ENCODE measurements at regions of chr1 and their contacts with region 1.

Region 1: DNA sequence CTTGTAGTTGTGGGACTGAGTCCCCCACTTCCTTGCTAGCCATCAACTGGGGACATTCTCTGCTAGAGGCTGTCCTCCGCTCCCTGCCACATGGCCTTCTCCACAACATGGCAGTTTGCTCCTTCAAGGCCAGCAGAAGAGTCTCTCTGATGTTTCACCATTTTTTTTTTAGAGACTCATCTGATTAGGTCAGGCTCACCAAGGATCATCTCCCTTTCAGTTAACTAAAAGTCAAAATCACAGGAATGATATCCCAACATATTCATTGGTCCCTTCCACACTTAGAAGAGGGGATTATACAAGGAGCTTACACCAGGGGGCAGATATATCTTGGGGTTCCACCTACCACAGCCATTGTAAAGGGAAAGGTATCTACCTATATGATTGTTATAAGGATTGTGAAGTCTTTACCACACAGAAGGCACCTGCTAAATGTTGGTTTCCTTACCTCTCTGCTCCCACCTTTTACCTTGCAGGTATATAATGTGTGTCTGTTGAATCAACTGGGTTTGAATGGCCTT is 23.3 kb downstream of the RIMKLA start:
- DNase-seq: no peak
- H3K4me3 ChIP-seq: no peak overlapping the region
- H3K27ac ChIP-seq: no peak overlapping the region
- H3K4me1 ChIP-seq: no peaks in the 10 kb centered on the region
- H3K27me3 ChIP-seq: peaks cover 18% of the 10 kb centered on the region
- CTCF ChIP-seq: peak; percentile 44

Region 2: DNA sequence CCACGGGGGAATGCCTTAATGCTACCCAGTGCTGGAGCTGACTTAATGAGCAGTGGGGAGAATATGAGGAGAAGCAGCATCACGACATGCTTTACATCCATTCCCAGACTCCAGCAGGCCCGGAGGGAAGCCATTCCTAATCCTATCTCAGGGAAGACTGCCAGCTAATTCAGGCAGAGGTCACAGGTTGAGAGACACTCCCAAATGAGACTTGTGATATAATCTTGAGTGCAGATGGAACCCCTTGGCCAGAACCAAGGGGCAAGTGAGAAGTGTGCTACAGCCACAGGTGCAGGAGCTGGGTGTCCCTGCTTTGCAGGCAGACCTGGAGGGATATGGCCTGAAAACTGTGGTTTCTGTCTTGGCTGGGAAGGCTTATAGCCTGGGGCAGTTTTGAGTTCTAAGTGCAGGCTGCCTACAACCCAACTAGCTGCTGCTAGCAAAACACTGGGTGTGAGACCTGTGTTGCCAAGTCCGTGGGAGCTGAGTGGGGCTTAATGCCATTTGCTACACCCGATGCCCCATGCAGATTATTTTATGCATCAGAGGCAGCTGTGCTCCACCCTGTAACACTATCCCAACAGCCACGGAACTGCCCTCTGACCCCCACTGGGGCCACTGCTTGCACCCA is 194.2 kb before region 1 on chr1:
- CTCF ChIA-PET with region 1: no interaction called
- POLR2A ChIA-PET with region 1: no interaction called
- intact Hi-C with region 1: no loop called
- DNase-seq: no peak
- H3K4me3 ChIP-seq: no peak overlapping the region
- H3K27ac ChIP-seq: no peak overlapping the region
- H3K4me1 ChIP-seq: peaks cover 16% of the 10 kb centered on the region
- H3K27me3 ChIP-seq: no peaks in the 10 kb centered on the region
- CTCF ChIP-seq: no peak

Region 3: GRCh38 chr1:42380586-42381279 is 23.2 kb before region 1 on chr1 and contains the start of gene RIMKLA:
- CTCF ChIA-PET with region 1: no interaction called
- POLR2A ChIA-PET with region 1: no interaction called
- intact Hi-C with region 1: no loop called
- DNase-seq: peak; percentile 53
- H3K4me3 ChIP-seq: peak within 1 kb of the TSS; percentile 45
- H3K27ac ChIP-seq: no peak within 1 kb of the TSS
- H3K4me1 ChIP-seq: no peaks in the 10 kb centered on the region
- H3K27me3 ChIP-seq: peaks cover 47% of the 10 kb centered on the region
- CTCF ChIP-seq: no peak
- total RNA-seq, gene RIMKLA: 0.04 and 0.24 TPM in 2 replicates

Region 4: GRCh38 chr1:42639116-42639515 is 235.2 kb after region 1 on chr1:
- CTCF ChIA-PET with region 1: no interaction called
- POLR2A ChIA-PET with region 1: no interaction called
- intact Hi-C with region 1: no loop called
- DNase-seq: no peak
- H3K4me3 ChIP-seq: no peak overlapping the region
- H3K27ac ChIP-seq: no peak overlapping the region
- H3K4me1 ChIP-seq: no peaks in the 10 kb centered on the region
- H3K27me3 ChIP-seq: no peaks in the 10 kb centered on the region
- CTCF ChIP-seq: no peak

Region 5: GRCh38 chr1:43383449-43383848 is 979.5 kb after region 1 on chr1:
- CTCF ChIA-PET with region 1: no interaction called
- POLR2A ChIA-PET with region 1: interaction called, 11 read pairs
- intact Hi-C with region 1: no loop called
- DNase-seq: no peak
- H3K4me3 ChIP-seq: no peak overlapping the region
- H3K27ac ChIP-seq: no peak overlapping the region
- H3K4me1 ChIP-seq: peaks cover 11% of the 10 kb centered on the region
- H3K27me3 ChIP-seq: no peaks in the 10 kb centered on the region
- CTCF ChIP-seq: 0 out of 2 replicates have a peak, but pooled peaks have one; percentile 24